HEK293T (cell line): ENCODE measurements at regions of chr15 and their contacts with region 1.

Region 1: GRCh38 chr15:75367913-75368688 is at the start of gene MAN2C1:
- DNase-seq: peak; percentile 98

Region 2: GRCh38 chr15:75335705-75336355 is 32.3 kb before region 1 on chr15 and contains the start of gene COMMD4:
- CTCF ChIA-PET with region 1: interaction called, 9 read pairs
- POLR2A ChIA-PET with region 1: interaction called, 17 read pairs
- DNase-seq: peak; percentile 81

Region 3: DNA sequence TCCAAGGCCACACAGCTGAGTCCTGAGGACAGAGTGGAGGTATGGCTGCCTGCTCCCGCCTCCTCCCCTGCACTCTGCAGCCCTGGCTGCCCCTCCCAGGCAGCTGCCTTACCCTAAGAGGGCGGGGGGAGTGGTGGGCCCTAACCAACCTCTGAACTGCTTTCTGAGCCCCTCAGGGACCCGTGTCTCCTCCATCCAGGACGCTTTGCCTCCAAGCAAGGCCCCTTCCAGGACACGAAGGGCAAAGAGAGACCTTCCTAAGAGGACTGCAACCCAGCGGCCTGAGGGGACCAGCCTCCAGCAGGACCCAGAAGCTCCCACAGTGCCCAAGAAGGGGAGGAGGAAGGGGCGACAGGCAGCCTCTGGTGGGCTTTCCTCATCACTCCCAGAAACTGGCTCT is 13.6 kb before region 1 on chr15:
- CTCF ChIA-PET with region 1: interaction called, 3 read pairs
- POLR2A ChIA-PET with region 1: interaction called, 58 read pairs
- DNase-seq: no peak

Region 4: DNA sequence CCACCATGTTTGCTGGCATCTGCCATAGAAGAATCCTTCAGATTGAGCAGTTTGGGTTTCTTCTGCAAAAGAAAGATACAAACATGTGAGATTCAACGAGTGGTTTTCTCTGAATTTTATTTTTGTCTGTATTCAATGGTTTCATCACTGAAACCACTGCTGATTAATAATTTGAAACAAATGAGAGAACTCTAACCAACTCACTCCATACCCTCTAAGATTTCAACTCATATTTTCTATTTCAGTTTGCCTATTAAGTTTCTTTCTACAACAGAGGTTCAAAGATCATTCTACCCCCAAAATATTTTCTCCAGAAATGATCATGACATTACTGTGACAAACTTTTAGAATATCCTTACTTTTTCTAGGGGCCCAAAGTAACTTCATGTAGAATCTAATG is 39.0 kb after region 1 on chr15:
- CTCF ChIA-PET with region 1: no interaction called
- POLR2A ChIA-PET with region 1: interaction called, 15 read pairs
- DNase-seq: no peak

Region 5: DNA sequence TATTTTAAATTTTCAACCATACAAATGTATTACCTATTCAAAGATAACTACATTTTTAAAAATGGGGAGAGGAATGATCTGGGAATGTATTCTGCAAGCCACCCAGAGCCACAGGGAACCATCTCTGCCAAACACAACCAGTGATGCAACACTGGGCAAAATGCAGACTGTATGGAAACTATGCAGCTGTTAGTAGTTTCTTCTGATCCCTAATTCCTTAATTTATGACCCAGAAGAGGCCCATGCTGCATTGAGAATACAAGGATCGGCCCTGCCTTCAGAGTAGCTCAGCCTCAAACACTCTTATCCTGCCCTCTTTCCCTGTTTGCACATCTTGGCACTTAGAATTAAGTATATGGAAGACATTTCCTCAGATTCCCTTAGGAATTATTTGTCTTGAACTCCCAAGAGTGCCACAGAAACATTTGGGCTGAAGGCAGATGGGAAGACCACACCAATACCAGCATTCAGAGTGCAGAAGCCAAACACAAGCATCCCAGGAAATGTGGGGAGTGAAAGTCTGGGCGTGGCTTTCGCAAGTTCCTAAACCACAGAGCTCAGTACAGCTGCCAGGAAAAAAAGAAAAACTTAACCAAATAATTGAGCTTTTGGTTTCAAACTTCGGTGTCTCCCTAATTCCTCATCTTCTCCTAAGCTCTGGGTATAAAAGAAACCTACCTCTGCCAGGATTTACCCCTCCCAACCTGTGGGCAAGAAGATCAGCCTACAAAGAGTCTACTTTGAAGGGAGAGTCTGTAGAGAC is 252.1 kb after region 1 on chr15:
- CTCF ChIA-PET with region 1: interaction called, 4 read pairs
- POLR2A ChIA-PET with region 1: interaction called, 31 read pairs
- DNase-seq: no peak

Region 6: DNA sequence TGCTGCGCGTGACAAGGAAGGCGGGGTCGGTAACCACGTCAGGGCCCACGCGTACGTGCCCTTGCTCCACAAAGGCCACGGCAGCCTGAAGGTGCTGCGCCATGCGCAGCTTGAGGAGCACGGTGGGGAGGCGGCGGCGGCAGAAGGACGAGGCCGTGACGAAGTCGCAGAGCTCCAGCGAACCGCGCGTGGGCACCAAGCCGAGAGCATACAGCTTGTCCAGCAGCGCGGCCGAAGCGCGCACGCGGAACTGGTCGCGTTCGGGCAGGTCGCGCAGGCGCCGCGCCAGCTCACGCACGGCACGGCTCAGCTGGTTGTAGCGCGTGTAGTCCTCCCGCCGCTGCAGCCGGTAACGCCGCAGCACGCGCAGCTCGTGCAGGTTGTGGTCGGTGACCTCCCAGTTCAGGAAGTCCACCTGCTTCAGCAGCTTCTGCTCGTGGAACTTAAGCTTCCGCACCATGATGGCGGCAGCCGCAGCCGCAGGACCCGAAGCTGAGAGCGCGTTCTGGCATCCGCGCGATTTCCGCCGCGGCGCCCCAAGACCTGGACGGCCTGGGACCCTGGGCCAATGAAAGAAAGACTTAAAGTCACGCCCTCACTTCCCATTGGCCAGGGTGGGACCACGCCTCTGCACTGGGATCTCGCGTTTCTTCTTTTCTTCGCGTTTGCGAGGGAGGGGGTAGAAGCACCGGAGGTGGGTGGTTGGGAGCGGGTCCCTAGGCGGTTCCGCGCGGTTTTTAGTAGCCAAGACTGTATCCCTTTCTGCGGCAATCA is 271.8 kb after region 1 on chr15 and contains the start of gene IMP3:
- CTCF ChIA-PET with region 1: interaction called, 9 read pairs
- POLR2A ChIA-PET with region 1: interaction called, 48 read pairs
- DNase-seq: peak; percentile 96

Region 7: GRCh38 chr15:75684642-75685041 is 316.5 kb after region 1 on chr15:
- CTCF ChIA-PET with region 1: interaction called, 10 read pairs
- POLR2A ChIA-PET with region 1: interaction called, 12 read pairs
- DNase-seq: no peak